ENCODE measurements at regions of chr19 and their contacts with region 1.

Region 1: GRCh38 chr19:41706741-41707501 is 1.5 kb upstream of the CEACAM5 start:
- DNase-seq: peak; percentile 49 to 84 (median 61)
- ATAC-seq: peak; percentile 96
- H3K4me3 ChIP-seq: peak overlapping the region; percentile 42
- H3K4me3 Mint-ChIP-seq: peak overlapping the region; percentile 60
- H3K27ac ChIP-seq: no peak overlapping the region
- H3K27ac Mint-ChIP-seq: no peak overlapping the region
- H3K4me1 ChIP-seq: peaks cover 8% of the 10 kb centered on the region
- H3K4me1 Mint-ChIP-seq: no peaks in the 10 kb centered on the region
- H3K27me3 ChIP-seq: peaks cover 22% of the 10 kb centered on the region in 2 experiments
- H3K27me3 Mint-ChIP-seq: peaks cover 54% of the 10 kb centered on the region
- CTCF ChIP-seq: peak; percentile 99

Region 2: DNA sequence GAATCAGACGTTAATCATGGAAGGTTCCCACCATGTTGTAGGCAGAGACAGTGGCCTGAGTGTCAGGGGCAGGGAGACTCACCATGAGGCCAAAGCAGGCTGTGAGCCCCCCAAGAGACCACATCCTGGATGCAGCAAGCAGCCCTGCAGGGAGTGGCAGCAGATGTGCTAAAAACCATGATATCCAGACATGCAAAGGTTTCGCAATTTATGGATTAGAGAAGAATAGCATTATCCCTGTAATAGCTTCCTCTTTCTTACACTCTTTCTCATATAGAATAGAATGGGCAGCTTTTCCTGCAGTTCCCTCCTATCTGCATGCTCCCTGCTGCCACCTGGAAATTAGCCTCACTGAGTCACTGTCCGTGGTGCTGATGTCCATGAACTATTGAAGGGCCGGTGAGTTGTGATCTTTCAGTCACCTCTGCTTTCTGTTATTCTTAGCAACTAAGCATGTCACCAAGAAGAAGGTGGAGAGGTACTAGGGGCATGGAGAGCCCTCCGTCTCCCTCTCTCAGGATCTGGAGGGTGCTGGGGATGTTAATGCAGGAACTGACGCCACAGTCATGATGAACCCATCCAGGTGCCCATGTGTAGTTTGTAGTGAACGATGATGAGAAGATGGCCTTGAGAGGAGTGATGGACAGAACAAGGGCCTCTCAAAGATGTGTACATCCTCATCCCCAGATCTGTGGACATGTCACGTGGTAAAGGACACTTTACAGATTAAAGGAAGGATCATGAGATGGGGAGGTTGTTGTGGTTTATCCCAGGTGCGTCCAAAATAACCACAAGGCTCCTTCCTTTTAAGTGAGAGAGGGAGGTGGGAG is 89.9 kb before region 1 on chr19:
- CTCF ChIA-PET with region 1: no interaction called
- POLR2A ChIA-PET with region 1: no interaction called
- intact Hi-C with region 1: no loop called
- DNase-seq: no peak
- ATAC-seq: no peak
- H3K4me3 ChIP-seq: no peak overlapping the region
- H3K4me3 Mint-ChIP-seq: no peak overlapping the region
- H3K27ac ChIP-seq: no peak overlapping the region
- H3K27ac Mint-ChIP-seq: no peak overlapping the region
- H3K4me1 ChIP-seq: no peaks in the 10 kb centered on the region
- H3K4me1 Mint-ChIP-seq: no peaks in the 10 kb centered on the region
- H3K27me3 ChIP-seq: peaks cover 0 to 5% of the 10 kb centered on the region in 2 experiments
- H3K27me3 Mint-ChIP-seq: peaks cover 39% of the 10 kb centered on the region
- CTCF ChIP-seq: no peak

Region 3: DNA sequence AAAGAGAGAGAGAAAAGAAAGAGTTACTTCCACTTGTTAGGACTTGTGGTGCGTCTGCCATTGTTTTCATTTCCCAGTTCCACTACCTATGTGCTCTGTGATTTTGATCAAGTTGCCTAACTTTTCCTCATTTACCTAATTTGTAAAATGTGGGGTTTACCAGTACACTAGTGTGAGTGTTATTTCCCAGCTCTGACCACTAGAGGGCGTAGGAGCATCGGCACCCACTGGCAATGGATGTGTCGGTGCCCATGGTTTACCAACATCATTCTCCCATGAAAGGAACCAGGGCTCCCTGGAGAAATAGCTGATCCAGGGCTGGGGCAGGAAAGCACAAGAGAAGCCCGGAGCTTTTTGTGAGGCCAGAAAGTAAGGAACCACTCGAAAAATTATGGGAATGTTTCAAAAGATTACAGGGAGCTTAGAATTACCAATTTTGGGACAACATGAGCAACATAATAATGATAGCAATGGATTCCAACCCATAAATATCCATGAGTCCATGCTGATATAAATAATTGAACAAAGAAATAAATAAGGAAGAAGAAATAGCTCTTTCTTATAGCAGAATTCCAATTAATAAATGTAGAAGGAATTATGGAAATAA is 64.9 kb before region 1 on chr19:
- CTCF ChIA-PET with region 1: interaction called, 10 read pairs
- POLR2A ChIA-PET with region 1: no interaction called
- intact Hi-C with region 1: loop called in 1 of 2 experiments (anchors 5 kb)
- DNase-seq: peak; percentile 49 to 87 (median 68)
- ATAC-seq: peak; percentile 54
- H3K4me3 ChIP-seq: no peak overlapping the region
- H3K4me3 Mint-ChIP-seq: no peak overlapping the region
- H3K27ac ChIP-seq: no peak overlapping the region
- H3K27ac Mint-ChIP-seq: no peak overlapping the region
- H3K4me1 ChIP-seq: peaks cover 38% of the 10 kb centered on the region
- H3K4me1 Mint-ChIP-seq: peaks cover 37% of the 10 kb centered on the region
- H3K27me3 ChIP-seq: peaks cover 0 to 9% of the 10 kb centered on the region in 2 experiments
- H3K27me3 Mint-ChIP-seq: peaks cover 14% of the 10 kb centered on the region
- CTCF ChIP-seq: peak; percentile 97

Region 4: DNA sequence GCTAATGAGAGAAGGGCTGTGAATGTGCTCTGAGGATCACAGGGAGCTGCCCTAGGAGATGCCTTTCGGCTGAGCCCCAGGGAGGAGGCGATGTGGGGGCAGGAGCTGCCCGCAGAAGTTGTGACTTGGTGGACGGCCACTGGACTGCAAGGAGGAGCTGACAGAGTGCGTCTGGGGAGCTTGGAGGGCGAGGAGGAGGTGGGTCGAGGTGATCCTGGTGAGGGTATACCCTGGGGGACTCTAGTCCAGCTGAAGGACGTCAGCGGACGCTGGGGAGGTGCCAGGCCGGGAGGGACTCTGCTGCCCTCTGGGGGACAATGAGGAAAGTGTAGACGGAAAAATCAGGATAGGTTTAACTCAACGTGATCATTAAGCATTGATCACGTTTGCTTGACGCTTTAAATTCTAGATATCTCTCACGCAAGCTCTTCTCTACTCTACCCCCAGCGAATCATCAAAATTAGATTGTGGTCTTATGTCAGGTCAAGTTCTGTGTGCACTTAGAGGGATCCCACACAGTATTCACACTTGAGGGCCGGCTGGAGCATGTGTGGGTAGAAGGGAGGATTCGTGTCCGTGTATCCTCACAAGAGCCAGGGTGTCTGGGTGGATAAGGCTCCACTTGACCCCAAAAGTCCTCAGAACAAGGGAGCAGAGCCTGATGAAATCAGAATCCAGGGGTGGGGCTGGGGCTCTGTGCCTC is 15.5 kb before region 1 on chr19:
- CTCF ChIA-PET with region 1: interaction called, 10 read pairs
- POLR2A ChIA-PET with region 1: interaction called, 3 read pairs
- intact Hi-C with region 1: no loop called
- DNase-seq: peak in 7 of 14 experiments; percentile 8 to 61 (median 16)
- ATAC-seq: no peak
- H3K4me3 ChIP-seq: no peak overlapping the region
- H3K4me3 Mint-ChIP-seq: no peak overlapping the region
- H3K27ac ChIP-seq: no peak overlapping the region
- H3K27ac Mint-ChIP-seq: no peak overlapping the region
- H3K4me1 ChIP-seq: no peaks in the 10 kb centered on the region
- H3K4me1 Mint-ChIP-seq: no peaks in the 10 kb centered on the region
- H3K27me3 ChIP-seq: peaks cover 10 to 29% of the 10 kb centered on the region in 2 experiments
- H3K27me3 Mint-ChIP-seq: peaks cover 57% of the 10 kb centered on the region
- CTCF ChIP-seq: peak; percentile 59

Region 5: GRCh38 chr19:41746593-41747227 is 39.8 kb after region 1 on chr19:
- CTCF ChIA-PET with region 1: no interaction called
- POLR2A ChIA-PET with region 1: no interaction called
- intact Hi-C with region 1: loop called (anchors 1 kb)
- DNase-seq: peak; percentile 12 to 71 (median 28)
- ATAC-seq: peak; percentile 91
- H3K4me3 ChIP-seq: no peak overlapping the region
- H3K4me3 Mint-ChIP-seq: no peak overlapping the region
- H3K27ac ChIP-seq: no peak overlapping the region
- H3K27ac Mint-ChIP-seq: no peak overlapping the region
- H3K4me1 ChIP-seq: no peaks in the 10 kb centered on the region
- H3K4me1 Mint-ChIP-seq: peaks cover 6% of the 10 kb centered on the region
- H3K27me3 ChIP-seq: peaks cover 22 to 32% of the 10 kb centered on the region in 2 experiments
- H3K27me3 Mint-ChIP-seq: peaks cover 78% of the 10 kb centered on the region
- CTCF ChIP-seq: peak; percentile 60

Region 6: DNA sequence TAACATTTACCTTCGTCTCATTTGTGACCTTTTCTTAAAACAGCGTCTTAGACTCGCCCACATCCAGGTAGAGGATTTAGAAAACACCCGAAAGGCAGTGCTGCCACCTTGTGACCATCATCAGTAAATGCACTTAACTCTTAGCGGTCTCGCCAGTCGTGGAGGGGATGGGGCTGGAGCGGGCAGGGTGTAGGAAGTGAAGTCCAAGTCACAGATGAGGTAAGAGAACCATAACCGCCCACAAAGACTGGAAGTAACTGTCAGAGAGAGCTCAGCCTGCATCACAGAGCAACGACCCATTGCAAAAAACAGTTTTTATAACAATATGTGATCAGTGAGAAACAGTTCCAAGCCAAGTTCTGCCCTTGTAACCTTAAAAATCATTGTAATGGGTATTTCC is 78.7 kb after region 1 on chr19:
- CTCF ChIA-PET with region 1: interaction called, 3 read pairs
- POLR2A ChIA-PET with region 1: no interaction called
- intact Hi-C with region 1: loop called in 1 of 2 experiments (anchors 1 kb)
- DNase-seq: peak; percentile 52 to 91 (median 66)
- ATAC-seq: peak; percentile 98
- H3K4me3 ChIP-seq: no peak overlapping the region
- H3K4me3 Mint-ChIP-seq: no peak overlapping the region
- H3K27ac ChIP-seq: no peak overlapping the region
- H3K27ac Mint-ChIP-seq: no peak overlapping the region
- H3K4me1 ChIP-seq: peaks cover 11% of the 10 kb centered on the region
- H3K4me1 Mint-ChIP-seq: peaks cover 17% of the 10 kb centered on the region
- H3K27me3 ChIP-seq: peaks cover 7 to 23% of the 10 kb centered on the region in 2 experiments
- H3K27me3 Mint-ChIP-seq: peaks cover 67% of the 10 kb centered on the region
- CTCF ChIP-seq: peak; percentile 81